ENCODE measurements at regions of chr14 and their contacts with region 1.

Region 1: DNA sequence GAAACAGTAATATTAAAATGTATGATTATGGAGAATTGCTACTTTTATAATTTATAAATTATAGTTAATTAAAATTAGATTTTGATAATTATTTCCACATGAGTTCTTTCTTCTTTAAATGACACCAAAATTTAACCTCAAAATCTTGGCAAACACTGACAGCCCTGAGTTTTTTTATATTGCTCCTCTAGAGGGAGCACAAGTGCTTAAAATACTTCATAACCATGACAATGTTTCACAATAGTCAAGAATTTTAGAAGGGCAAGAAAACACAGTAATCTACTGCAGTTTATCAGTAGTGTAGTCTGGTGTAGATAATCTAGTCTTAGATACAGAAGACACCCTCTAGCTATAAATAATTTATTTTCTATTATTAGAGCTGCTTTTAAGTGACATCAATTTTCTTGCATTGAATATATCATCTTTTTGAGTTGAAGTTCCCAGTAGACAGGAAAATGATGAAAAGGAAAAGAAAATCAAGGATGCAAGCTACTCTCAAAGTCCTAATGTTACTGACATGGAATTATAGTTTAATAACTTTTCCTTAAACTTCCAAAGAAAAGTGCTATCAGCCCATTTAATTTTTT is 14.3 kb upstream of the PTGER2 start:
- DNase-seq: no peak
- H3K4me3 Mint-ChIP-seq: no peak overlapping the region
- H3K27ac Mint-ChIP-seq: no peak overlapping the region
- H3K4me1 Mint-ChIP-seq: peaks cover 41% of the 10 kb centered on the region
- H3K27me3 Mint-ChIP-seq: peaks cover 12% of the 10 kb centered on the region

Region 2: GRCh38 chr14:52369305-52369801 is 69.6 kb after region 1 on chr14:
- CTCF ChIA-PET with region 1: no interaction called
- POLR2A ChIA-PET with region 1: no interaction called
- DNase-seq: no peak
- H3K4me3 Mint-ChIP-seq: no peak overlapping the region
- H3K27ac Mint-ChIP-seq: no peak overlapping the region
- H3K4me1 Mint-ChIP-seq: no peaks in the 10 kb centered on the region
- H3K27me3 Mint-ChIP-seq: peaks cover 12% of the 10 kb centered on the region

Region 3: DNA sequence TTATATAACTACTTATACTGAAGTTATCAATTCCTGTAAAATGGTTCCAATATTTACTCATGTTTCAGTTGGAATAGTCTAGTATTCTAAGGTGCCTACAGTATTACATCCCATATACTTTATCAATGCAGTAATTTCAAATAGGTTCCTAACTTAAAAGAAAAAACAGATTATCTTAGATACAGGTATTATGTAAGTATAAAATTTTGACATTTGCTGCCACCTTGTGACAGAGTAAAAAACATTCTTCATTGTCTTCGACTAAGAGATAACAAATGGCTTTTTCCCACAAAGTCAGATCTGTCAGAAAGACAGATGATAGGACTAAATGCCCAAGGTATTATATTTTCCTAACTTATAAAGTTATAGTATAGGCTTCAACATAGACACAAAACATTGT is 173.8 kb after region 1 on chr14:
- CTCF ChIA-PET with region 1: interaction called, 17 read pairs
- POLR2A ChIA-PET with region 1: no interaction called
- DNase-seq: no peak
- H3K4me3 Mint-ChIP-seq: no peak overlapping the region
- H3K27ac Mint-ChIP-seq: no peak overlapping the region
- H3K4me1 Mint-ChIP-seq: peaks cover 12% of the 10 kb centered on the region
- H3K27me3 Mint-ChIP-seq: no peaks in the 10 kb centered on the region

Region 4: GRCh38 chr14:53044486-53044885 is 744.7 kb after region 1 on chr14:
- CTCF ChIA-PET with region 1: no interaction called
- POLR2A ChIA-PET with region 1: no interaction called
- DNase-seq: no peak
- H3K4me3 Mint-ChIP-seq: no peak overlapping the region
- H3K27ac Mint-ChIP-seq: no peak overlapping the region
- H3K4me1 Mint-ChIP-seq: no peaks in the 10 kb centered on the region
- H3K27me3 Mint-ChIP-seq: no peaks in the 10 kb centered on the region

Measured in activated CD4-positive, alpha-beta memory T cell treated with anti-CD3 and anti-CD28 coated beads, Interleukin-2, amount 10 ng/mL, durations not matched to agents 7 days and 5 days (primary cell).